ENCODE measurements at regions of chr2 and their contacts with region 1.

Region 1: GRCh38 chr2:48107326-48107925 is 201.1 kb upstream of the FBXO11 start:
- DNase-seq: peak in 2 of 3 donors; percentile 43 to 72
- H3K4me3 ChIP-seq: no peak overlapping the region
- H3K4me3 Mint-ChIP-seq: no peak overlapping the region
- H3K27ac ChIP-seq: peak overlapping the region in 1 of 2 donors; percentile 6
- H3K27ac Mint-ChIP-seq: peak overlapping the region in 6 of 7 donors; percentile 0 to 78 (median 39)
- H3K4me1 ChIP-seq: peaks cover 35 to 52% of the 10 kb centered on the region in 2 donors
- H3K4me1 Mint-ChIP-seq: peaks cover 47% of the 10 kb centered on the region
- H3K27me3 ChIP-seq: no peaks in the 10 kb centered on the region
- H3K27me3 Mint-ChIP-seq: no peaks in the 10 kb centered on the region
- CTCF ChIP-seq: no peak

Region 2: DNA sequence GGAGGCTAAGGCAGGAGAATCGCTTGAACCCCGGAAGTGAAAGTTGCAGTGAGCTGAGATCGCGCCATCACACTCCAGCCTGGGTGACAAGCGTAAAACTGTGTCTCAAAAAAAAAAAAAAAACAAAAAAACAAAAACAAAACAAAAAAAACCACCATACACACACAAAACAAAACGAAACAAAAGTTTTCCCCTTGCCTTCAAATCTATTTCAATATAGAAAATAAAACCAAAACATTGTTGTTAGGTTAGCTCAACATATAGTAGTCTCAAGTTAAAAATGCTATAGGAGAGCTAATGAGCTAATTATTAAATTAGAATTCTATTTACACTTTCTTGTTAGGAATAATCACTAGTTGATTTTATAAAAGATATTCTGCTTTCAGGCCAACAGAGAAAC is 244.5 kb before region 1 on chr2:
- intact Hi-C with region 1: loop called in 1 of 2 experiments (anchors 2 kb)
- DNase-seq: no peak
- H3K4me3 ChIP-seq: no peak overlapping the region
- H3K4me3 Mint-ChIP-seq: no peak overlapping the region
- H3K27ac ChIP-seq: no peak overlapping the region
- H3K27ac Mint-ChIP-seq: peak overlapping the region in 1 of 7 donors; percentile 37
- H3K4me1 ChIP-seq: peaks cover 5 to 11% of the 10 kb centered on the region in 2 donors
- H3K4me1 Mint-ChIP-seq: peaks cover 19% of the 10 kb centered on the region
- H3K27me3 ChIP-seq: no peaks in the 10 kb centered on the region
- H3K27me3 Mint-ChIP-seq: no peaks in the 10 kb centered on the region
- CTCF ChIP-seq: no peak